ENCODE measurements at regions of chr1 and their contacts with region 1.

Region 1: DNA sequence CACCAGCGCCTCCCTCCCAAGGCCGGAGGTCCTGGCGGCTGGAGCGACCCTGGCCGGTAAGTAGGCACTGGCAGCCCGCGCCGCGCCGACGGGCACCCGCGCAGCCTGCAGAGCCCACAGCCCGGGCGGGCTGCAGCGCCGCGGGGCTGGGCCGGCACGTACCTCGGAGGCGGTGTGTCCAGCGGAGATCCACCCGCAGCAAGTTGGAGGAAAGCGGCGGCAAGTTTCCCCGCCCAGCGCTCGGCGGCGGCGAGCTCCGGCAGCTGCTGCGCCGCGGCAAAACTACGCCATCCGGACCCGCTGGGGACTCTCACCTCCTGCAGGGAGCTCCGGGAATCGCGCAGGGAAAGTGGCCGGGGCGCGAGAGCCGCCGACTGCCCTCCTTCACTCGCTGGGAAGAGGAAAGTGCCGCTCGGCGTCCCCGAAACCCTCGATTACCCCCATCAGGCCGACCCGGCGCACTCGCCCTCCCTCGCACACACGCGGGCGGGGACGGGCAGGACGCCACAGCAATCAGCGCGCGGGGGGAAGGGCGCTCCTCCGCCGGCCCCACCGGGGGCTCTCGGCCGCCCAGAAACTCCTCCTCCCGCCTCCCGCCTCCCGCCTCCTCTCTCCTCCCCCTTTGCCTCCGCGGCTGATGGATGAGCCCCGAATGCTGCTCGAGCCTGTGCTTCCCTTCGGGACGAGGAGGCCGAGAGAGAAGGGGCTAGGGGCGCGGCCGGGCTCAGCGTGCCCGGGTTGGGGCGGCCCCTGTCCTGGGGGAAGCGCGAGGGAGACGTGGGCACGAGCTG is at the start of gene TGFBR3:
- DNase-seq: peak; percentile 94
- ATAC-seq: peak; percentile 97
- total RNA-seq, gene TGFBR3: 36.3 TPM

Region 2: GRCh38 chr1:91511386-91511785 is 374.5 kb before region 1 on chr1:
- intact Hi-C with region 1: loop called (anchors 5 kb)
- DNase-seq: no peak
- ATAC-seq: no peak

Region 3: DNA sequence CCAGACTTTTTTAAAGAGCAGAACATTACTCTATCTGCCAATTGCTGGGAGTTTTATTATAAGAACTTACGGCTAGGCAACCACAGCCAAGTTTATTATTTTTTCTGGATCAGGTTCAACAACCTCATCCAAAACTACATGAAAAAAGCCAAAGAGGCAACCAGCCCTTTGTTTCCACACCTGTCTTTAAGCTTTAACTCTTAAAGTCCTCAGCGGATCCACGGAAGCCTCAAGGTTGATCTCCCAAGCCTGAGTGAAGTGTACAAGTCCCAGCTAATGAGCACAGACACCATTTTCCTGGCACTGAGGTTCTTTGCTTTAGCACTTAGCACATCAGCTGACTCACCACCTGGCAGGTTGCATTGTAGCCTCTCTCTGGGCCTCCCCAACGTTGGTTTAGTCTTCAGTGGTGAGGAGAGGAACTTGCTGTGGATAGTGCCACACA is 143.0 kb before region 1 on chr1:
- intact Hi-C with region 1: loop called (anchors 10 kb)
- DNase-seq: no peak
- ATAC-seq: peak; percentile 20

Region 4: GRCh38 chr1:91830242-91831131 is 55.4 kb before region 1 on chr1:
- intact Hi-C with region 1: loop called (anchors 2 kb)
- DNase-seq: peak; percentile 77
- ATAC-seq: peak; percentile 76

Region 5: DNA sequence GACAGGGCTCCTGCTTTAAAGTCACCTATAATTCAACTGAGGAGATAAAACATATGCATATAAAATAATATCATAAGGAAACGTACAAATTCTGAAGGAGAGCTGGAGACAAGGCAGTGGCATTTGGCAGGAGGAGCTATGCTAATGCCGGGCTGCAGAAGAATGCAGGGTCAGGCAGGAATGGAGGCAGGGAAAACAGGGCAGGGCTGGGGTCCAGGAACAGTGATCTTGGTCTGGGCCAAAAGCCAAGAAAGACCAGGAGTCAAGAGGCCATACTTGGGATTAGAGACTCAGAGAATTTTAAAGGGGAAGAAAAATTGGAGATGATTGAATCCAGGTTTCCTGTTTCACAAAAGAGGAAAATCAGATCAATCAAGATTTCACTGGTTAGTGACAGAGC is 43.3 kb after region 1 on chr1:
- intact Hi-C with region 1: loop called (anchors 5 kb)
- DNase-seq: no peak
- ATAC-seq: peak; percentile 63

Measured in Right ventricle myocardium inferior (tissue), 1 donor.